ENCODE measurements at regions of chr16 and their contacts with region 1.

Region 1: DNA sequence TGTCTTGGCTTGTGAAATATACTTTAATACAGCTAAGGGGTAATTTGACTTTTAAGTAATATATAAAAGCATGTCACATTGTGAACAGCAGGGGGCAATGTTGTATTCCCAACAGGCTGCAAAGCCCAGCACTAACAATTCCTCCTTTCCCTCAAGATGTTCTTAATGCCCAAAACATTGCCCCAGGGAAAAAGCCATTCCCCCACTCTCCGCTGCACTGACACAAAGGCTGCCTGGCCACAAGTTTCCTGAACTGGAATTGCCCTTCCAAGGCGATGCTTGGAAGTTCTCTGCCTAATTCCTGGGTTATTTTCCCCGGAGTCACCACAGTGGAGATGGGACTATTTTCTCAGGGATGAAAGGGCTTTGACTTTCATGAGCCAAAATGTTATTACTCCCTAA is 27.2 kb downstream of the CLEC16A start:
- DNase-seq: no peak
- H3K4me3 ChIP-seq: no peak overlapping the region
- H3K27ac ChIP-seq: peak overlapping the region; percentile 53
- H3K4me1 ChIP-seq: peaks cover 9% of the 10 kb centered on the region
- H3K27me3 ChIP-seq: no peaks in the 10 kb centered on the region
- CTCF ChIP-seq: peak; percentile 64 to 92 (median 78)
- POLR2A ChIP-seq: no peak

Region 2: GRCh38 chr16:11105038-11105903 is 133.7 kb after region 1 on chr16:
- intact Hi-C with region 1: loop called (anchors 10 kb)
- DNase-seq: no peak
- H3K4me3 ChIP-seq: no peak overlapping the region
- H3K27ac ChIP-seq: peak overlapping the region; percentile 81
- H3K4me1 ChIP-seq: peaks cover 48% of the 10 kb centered on the region
- H3K27me3 ChIP-seq: no peaks in the 10 kb centered on the region
- CTCF ChIP-seq: no peak
- POLR2A ChIP-seq: no peak

Region 3: DNA sequence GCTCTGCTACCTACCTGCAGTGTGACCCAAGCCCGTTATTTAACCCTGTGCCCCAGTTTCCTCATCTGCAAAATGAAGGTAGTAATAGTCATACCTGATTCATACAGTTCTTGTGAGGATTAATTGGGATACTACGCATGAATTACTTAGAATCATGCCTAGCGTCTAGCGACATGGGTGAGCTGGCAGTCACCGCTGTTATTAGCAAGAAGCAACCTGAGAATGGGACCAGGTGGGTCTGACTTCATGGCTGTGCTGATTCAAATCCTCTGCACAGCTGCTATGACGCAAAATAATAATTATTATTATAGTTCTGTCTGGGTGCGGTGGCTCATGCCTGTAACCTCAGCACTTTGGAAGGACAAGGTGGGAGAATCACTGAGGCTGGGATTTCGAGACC is 276.6 kb after region 1 on chr16:
- intact Hi-C with region 1: loop called (anchors 2 kb)
- DNase-seq: no peak
- H3K4me3 ChIP-seq: no peak overlapping the region
- H3K27ac ChIP-seq: no peak overlapping the region
- H3K4me1 ChIP-seq: peaks cover 7% of the 10 kb centered on the region
- H3K27me3 ChIP-seq: no peaks in the 10 kb centered on the region
- CTCF ChIP-seq: no peak
- POLR2A ChIP-seq: no peak